Activated T-helper 1 cell treated with anti-CD3 and anti-CD28 coated beads, Interleukin-12 subunit alpha, Interleukin-12 subunit beta, Interleukin-2, Interleukin-4 antibody, amounts not matched to agents 30 ng/mL and 10 ng/mL and 1 ng/mL, durations not matched to agents 14 hours and 24 hours and 36 hours (primary cell): ENCODE measurements at regions of chr2 and their contacts with region 1.

Region 1: DNA sequence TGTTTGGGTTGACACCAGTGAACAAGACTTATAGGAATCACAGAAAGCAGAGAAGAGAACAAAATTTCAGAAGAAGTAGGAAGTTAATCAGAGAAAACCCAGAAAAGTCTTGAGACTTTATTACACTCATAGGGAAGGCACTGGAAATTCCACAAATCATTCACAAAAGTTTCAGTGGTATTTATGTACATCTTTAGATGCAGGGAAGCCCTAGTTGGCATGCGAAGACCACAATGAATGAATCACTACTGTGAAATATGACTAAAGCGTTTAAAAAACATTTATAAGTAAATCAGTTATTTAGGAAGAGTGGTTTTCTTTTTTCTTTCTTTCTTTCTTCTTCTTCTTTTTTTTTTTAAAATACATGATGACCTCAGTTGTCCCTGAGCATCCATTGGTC is 105.1 kb downstream of the NUP35 start:
- DNase-seq: no peak
- H3K4me3 Mint-ChIP-seq: no peak overlapping the region
- H3K27ac Mint-ChIP-seq: peak overlapping the region; percentile 14
- H3K4me1 Mint-ChIP-seq: peaks cover 7% of the 10 kb centered on the region
- H3K27me3 Mint-ChIP-seq: no peaks in the 10 kb centered on the region

Region 2: GRCh38 chr2:182565906-182566567 is 663.3 kb before region 1 on chr2:
- intact Hi-C with region 1: no loop called
- DNase-seq: no peak
- H3K4me3 Mint-ChIP-seq: no peak overlapping the region
- H3K27ac Mint-ChIP-seq: no peak overlapping the region
- H3K4me1 Mint-ChIP-seq: no peaks in the 10 kb centered on the region
- H3K27me3 Mint-ChIP-seq: no peaks in the 10 kb centered on the region

Region 3: DNA sequence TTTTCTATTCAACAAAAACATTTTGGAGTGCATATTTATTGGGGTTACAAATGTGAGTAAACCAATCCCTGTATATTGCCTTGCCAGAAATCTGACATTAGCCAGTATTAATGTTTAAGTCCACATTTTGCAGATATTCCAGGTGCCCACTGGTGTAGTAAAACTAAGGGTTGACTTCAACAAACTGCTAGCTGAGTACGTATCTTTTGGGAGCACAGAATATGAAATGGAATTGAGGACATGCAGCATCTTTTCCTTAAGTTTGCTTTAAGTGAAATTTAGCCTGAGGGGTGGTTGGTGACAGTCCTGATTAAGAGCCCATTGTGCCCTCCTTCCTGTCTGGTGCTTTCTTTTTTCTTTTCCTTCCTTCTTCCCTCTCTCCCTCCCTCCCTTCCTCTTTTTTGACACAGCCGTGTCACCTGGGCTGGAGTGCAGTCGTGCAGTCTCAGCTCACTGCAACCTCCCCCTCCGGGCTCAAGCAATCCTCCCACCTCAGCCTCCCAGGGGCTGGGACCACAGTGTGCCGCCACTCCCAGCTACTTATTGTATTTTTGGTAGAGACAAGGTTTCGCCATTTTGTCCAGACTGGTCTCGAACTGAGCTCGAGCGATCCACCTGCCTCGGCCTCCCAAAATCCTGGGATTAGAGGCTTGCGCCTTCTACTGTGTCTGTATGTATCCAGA is 103.6 kb before region 1 on chr2:
- intact Hi-C with region 1: no loop called
- DNase-seq: no peak
- H3K4me3 Mint-ChIP-seq: peak overlapping the region; percentile 96
- H3K27ac Mint-ChIP-seq: peak overlapping the region; percentile 98
- H3K4me1 Mint-ChIP-seq: peaks cover 29% of the 10 kb centered on the region
- H3K27me3 Mint-ChIP-seq: peaks cover 3% of the 10 kb centered on the region

Region 4: GRCh38 chr2:183214680-183215079 is 14.7 kb before region 1 on chr2:
- intact Hi-C with region 1: loop called (anchors 1 kb)
- DNase-seq: no peak
- H3K4me3 Mint-ChIP-seq: no peak overlapping the region
- H3K27ac Mint-ChIP-seq: no peak overlapping the region
- H3K4me1 Mint-ChIP-seq: peaks cover 17% of the 10 kb centered on the region
- H3K27me3 Mint-ChIP-seq: peaks cover 2% of the 10 kb centered on the region